Left cardiac atrium (tissue), 4 donors: ENCODE measurements at regions of chr12 and their contacts with region 1.

Region 1: DNA sequence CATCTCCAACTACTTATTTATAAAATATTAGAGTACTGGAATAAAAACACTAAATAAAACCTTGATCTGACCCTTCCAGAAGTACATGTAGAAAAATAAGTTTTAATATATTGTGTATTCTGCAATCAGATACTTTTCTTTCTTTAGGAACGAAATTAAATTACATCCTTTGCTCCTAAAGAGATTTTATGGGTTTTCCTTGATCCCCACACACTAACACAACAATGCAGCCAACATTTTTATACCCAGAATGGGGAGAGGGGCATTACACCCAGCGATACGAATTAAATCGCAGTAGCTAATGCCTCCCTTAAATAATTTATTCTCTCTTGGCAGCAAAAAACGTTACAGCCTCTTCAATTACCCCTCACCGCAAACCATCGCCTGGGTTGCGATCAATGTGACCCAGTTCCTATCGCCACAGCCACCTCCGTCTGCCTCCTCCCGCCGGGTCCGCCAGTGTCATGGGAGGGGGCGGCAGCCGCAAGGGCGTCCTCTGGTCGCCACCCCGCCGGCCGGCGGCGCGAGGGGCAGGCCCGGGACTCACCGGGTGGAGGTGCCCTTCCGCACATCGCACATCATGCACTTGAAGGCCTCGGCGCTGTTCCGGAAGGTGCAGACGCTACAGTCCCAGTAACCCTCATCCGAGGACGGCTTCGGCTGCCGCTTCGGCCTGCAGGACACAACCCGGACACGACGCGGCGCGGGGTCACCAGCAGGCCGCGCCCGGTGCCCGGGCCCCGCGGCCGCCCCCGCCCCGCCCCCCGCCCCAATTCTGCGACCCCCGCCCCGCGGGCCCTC is 796 bp downstream of the YAF2 start:
- DNase-seq: peak; percentile 84
- ATAC-seq: peak; percentile 56 to 79

Region 2: GRCh38 chr12:42144408-42145196 is 92.7 kb before region 1 on chr12 and contains the start of gene GXYLT1:
- intact Hi-C with region 1: loop called (anchors 5 to 10 kb)
- DNase-seq: peak; percentile 95
- ATAC-seq: peak; percentile 97 to 99
- total RNA-seq, gene GXYLT1: 6.3 to 6.4 TPM

Region 3: GRCh38 chr12:42325653-42326474 is 88.6 kb after region 1 on chr12 and contains the starts of genes PPHLN1 and ZCRB1:
- intact Hi-C with region 1: loop called in 1 of 2 experiments (anchors 10 kb)
- DNase-seq: peak; percentile 89
- ATAC-seq: peak; percentile 98 to 99
- total RNA-seq, gene PPHLN1: 24.6 to 37.5 TPM
- total RNA-seq, gene ZCRB1: 46.6 to 51.8 TPM